Activated T-helper 1 cell treated with anti-CD3 and anti-CD28 coated beads, Interleukin-12 subunit alpha, Interleukin-12 subunit beta, Interleukin-2, Interleukin-4 antibody, amounts not matched to agents 30 ng/mL and 10 ng/mL and 1 ng/mL, durations not matched to agents 14 hours and 24 hours and 36 hours (primary cell): ENCODE measurements at regions of chr5 and their contacts with region 1.

Region 1: GRCh38 chr5:76582230-76583162 is 40.7 kb downstream of the F2RL2 start:
- DNase-seq: no peak
- H3K4me3 Mint-ChIP-seq: no peak overlapping the region
- H3K27ac Mint-ChIP-seq: no peak overlapping the region
- H3K4me1 Mint-ChIP-seq: peaks cover 33% of the 10 kb centered on the region
- H3K27me3 Mint-ChIP-seq: no peaks in the 10 kb centered on the region

Region 2: GRCh38 chr5:76337953-76338451 is 244.5 kb before region 1 on chr5:
- intact Hi-C with region 1: loop called (anchors 1 kb)
- DNase-seq: peak; percentile 36
- H3K4me3 Mint-ChIP-seq: no peak overlapping the region
- H3K27ac Mint-ChIP-seq: no peak overlapping the region
- H3K4me1 Mint-ChIP-seq: peaks cover 28% of the 10 kb centered on the region
- H3K27me3 Mint-ChIP-seq: no peaks in the 10 kb centered on the region

Region 3: GRCh38 chr5:76715736-76716455 is 133.4 kb after region 1 on chr5 and contains the start of gene F2R:
- intact Hi-C with region 1: no loop called
- DNase-seq: no peak
- H3K4me3 Mint-ChIP-seq: peak within 1 kb of the TSS; percentile 85
- H3K27ac Mint-ChIP-seq: peak within 1 kb of the TSS; percentile 34
- H3K4me1 Mint-ChIP-seq: peaks cover 39% of the 10 kb centered on the region
- H3K27me3 Mint-ChIP-seq: peaks cover 19% of the 10 kb centered on the region
- total RNA-seq, gene F2R: 3.9 and 4.0 TPM in 2 replicates

Region 4: DNA sequence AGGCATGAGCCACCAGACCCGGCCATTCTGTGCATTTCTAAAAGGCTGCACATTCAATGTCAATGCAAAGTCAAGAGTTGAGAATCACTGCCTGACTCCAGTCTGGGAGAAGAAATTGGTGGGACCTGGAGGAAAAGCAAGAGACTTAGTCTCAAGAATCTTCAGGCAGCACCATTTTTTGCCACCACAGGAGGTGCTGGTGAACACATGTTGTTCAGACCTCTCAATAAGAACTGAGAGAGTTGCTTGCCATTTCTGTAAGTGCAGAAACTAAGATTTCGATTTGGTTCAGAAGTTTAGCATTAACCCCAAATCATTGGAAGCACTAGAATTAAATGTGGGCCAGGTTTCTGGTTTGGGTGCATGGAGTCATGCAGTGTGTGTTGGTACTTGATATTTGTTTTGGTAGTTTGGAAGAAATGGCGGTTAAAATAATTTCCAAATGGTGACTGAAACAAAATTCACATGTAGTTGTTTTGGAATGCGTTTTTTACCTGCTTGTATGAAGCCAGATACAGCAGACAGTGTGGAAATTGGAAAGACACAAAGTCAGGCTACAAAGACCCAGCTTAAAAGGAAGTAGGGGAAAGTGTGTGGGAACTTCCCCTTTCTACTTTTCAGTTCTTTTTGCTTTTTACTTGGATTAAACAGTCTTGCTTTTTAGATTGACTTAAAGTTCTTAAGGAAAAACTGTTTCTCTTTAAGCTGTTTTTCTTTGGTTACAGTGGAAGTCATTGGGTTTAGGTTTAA is 648.4 kb after region 1 on chr5:
- intact Hi-C with region 1: no loop called
- DNase-seq: no peak
- H3K4me3 Mint-ChIP-seq: no peak overlapping the region
- H3K27ac Mint-ChIP-seq: no peak overlapping the region
- H3K4me1 Mint-ChIP-seq: no peaks in the 10 kb centered on the region
- H3K27me3 Mint-ChIP-seq: peaks cover 11% of the 10 kb centered on the region